CD4-positive, alpha-beta T cell (primary cell): ENCODE measurements at regions of chr12 and their contacts with region 1.

Region 1: GRCh38 chr12:131949431-131950181 is at the start of gene EP400:
- DNase-seq: peak; percentile 83 to 98 (median 94)
- ATAC-seq: peak; percentile 85
- H3K4me3 ChIP-seq: peak within 1 kb of the TSS; percentile 93
- H3K4me3 Mint-ChIP-seq: peak within 1 kb of the TSS; percentile 93
- H3K27ac ChIP-seq: peak within 1 kb of the TSS; percentile 48 to 70
- H3K27ac Mint-ChIP-seq: peak within 1 kb of the TSS; percentile 90
- H3K4me1 ChIP-seq: peaks cover 47% of the 10 kb centered on the region
- H3K4me1 Mint-ChIP-seq: peaks cover 45% of the 10 kb centered on the region
- H3K27me3 ChIP-seq: no peaks in the 10 kb centered on the region
- H3K27me3 Mint-ChIP-seq: no peaks in the 10 kb centered on the region
- CTCF ChIP-seq: peak; percentile 22
- total RNA-seq, gene EP400: 56.4 to 56.5 TPM

Region 2: DNA sequence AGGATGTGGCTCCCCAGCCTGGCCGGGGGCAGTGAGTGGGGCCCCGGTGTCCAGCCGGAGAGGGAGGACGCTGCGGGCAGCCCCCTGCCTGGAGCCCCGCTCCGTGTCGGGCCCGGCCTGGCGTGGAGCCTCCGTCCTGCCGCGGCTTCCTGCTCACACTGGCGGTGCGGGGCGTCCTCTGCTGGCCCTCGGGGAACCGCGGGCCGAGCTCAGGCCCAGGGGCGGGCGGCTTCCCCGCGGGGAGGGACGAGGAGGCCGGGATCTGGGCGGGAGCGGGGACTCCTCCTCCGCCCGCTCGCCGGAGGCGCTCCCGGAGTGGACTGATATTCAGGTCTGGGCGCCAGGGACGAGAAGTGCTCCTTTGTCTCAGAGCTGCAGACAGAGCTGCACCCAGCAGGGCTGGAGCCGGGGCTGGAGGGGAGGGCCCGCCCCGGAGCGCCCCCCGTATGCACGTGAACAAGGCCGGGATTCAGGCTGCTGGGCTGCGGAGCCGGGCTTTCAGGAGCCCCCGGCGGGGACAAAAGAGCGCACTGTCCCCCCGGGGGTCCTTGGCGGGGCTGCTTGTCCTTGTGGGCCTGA is 119.2 kb before region 1 on chr12:
- CTCF ChIA-PET with region 1: no interaction called
- POLR2A ChIA-PET with region 1: no interaction called
- intact Hi-C with region 1: loop called in 1 of 2 experiments (anchors 10 kb)
- DNase-seq: peak in 5 of 14 experiments; percentile 25 to 64 (median 46)
- ATAC-seq: peak; percentile 21
- H3K4me3 ChIP-seq: peak overlapping the region; percentile 44
- H3K4me3 Mint-ChIP-seq: peak overlapping the region; percentile 78
- H3K27ac ChIP-seq: no peak overlapping the region
- H3K27ac Mint-ChIP-seq: no peak overlapping the region
- H3K4me1 ChIP-seq: peaks cover 28% of the 10 kb centered on the region
- H3K4me1 Mint-ChIP-seq: peaks cover 13% of the 10 kb centered on the region
- H3K27me3 ChIP-seq: peaks cover 30 to 45% of the 10 kb centered on the region in 2 experiments
- H3K27me3 Mint-ChIP-seq: peaks cover 51% of the 10 kb centered on the region
- CTCF ChIP-seq: no peak

Region 3: GRCh38 chr12:131894313-131894860 is 55.2 kb before region 1 on chr12 and contains the start of gene ULK1:
- CTCF ChIA-PET with region 1: no interaction called
- POLR2A ChIA-PET with region 1: no interaction called
- intact Hi-C with region 1: loop called (anchors 1 kb)
- DNase-seq: peak; percentile 83 to 96 (median 92)
- ATAC-seq: peak; percentile 82
- H3K4me3 ChIP-seq: peak within 1 kb of the TSS; percentile 71
- H3K4me3 Mint-ChIP-seq: peak within 1 kb of the TSS; percentile 93
- H3K27ac ChIP-seq: peak within 1 kb of the TSS in 1 of 2 donors; percentile 13
- H3K27ac Mint-ChIP-seq: peak within 1 kb of the TSS; percentile 88
- H3K4me1 ChIP-seq: peaks cover 31% of the 10 kb centered on the region
- H3K4me1 Mint-ChIP-seq: peaks cover 25% of the 10 kb centered on the region
- H3K27me3 ChIP-seq: no peaks in the 10 kb centered on the region
- H3K27me3 Mint-ChIP-seq: no peaks in the 10 kb centered on the region
- CTCF ChIP-seq: no peak
- total RNA-seq, gene ULK1: 85.0 to 91.6 TPM

Region 4: GRCh38 chr12:131928711-131929580 is 20.7 kb before region 1 on chr12 and contains the start of gene PUS1:
- CTCF ChIA-PET with region 1: interaction called, 19 read pairs
- POLR2A ChIA-PET with region 1: interaction called, 10 read pairs
- intact Hi-C with region 1: loop called (anchors 1 kb)
- DNase-seq: peak; percentile 87 to 97 (median 92)
- ATAC-seq: peak; percentile 84
- H3K4me3 ChIP-seq: peak within 1 kb of the TSS; percentile 96
- H3K4me3 Mint-ChIP-seq: peak within 1 kb of the TSS; percentile 97
- H3K27ac ChIP-seq: peak within 1 kb of the TSS; percentile 55 to 61
- H3K27ac Mint-ChIP-seq: peak within 1 kb of the TSS; percentile 82
- H3K4me1 ChIP-seq: peaks cover 28% of the 10 kb centered on the region
- H3K4me1 Mint-ChIP-seq: peaks cover 35% of the 10 kb centered on the region
- H3K27me3 ChIP-seq: no peaks in the 10 kb centered on the region
- H3K27me3 Mint-ChIP-seq: no peaks in the 10 kb centered on the region
- CTCF ChIP-seq: no peak
- total RNA-seq, gene PUS1: 17.7 to 18.2 TPM

Region 5: DNA sequence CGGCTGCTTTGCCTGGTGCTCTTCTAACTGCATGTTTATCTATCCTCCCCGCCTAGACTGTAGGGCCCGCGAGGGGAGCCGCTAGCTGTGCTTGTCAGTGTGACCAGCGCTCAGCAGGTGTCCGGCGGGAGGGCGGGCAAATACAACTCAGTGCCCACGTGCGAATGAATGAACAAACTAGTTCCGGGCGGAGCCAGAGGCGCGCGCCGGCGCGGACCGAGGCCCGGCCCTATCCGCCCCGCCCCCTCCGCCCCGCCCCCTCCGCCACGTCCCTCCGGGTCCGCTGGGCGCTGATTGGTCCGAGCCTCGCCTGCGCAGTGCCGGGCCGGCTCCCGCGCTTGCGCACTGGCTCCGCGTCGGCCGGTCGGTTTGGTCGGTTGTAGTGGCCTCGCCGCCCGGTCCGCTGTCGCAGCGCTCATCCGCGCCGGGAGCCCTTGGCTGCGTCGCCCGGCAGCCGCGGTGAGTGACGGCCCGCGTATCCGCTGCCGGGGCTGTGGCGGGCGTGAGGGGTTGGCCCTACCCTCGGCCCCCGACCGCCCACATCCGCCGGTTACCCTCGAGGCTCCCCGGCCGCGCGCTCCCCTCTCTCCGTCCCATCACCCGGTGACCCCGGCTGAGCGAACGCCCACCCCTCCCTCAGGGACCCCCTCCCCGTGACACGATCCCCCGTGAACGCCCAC is 134.5 kb after region 1 on chr12:
- CTCF ChIA-PET with region 1: no interaction called
- POLR2A ChIA-PET with region 1: no interaction called
- intact Hi-C with region 1: loop called in 1 of 2 experiments (anchors 5 kb)
- DNase-seq: peak; percentile 74 to 95 (median 84)
- ATAC-seq: peak; percentile 94
- H3K4me3 ChIP-seq: peak overlapping the region; percentile 75
- H3K4me3 Mint-ChIP-seq: peak overlapping the region; percentile 86
- H3K27ac ChIP-seq: peak overlapping the region in 1 of 2 donors; percentile 88
- H3K27ac Mint-ChIP-seq: peak overlapping the region; percentile 24
- H3K4me1 ChIP-seq: peaks cover 23% of the 10 kb centered on the region
- H3K4me1 Mint-ChIP-seq: peaks cover 27% of the 10 kb centered on the region
- H3K27me3 ChIP-seq: no peaks in the 10 kb centered on the region
- H3K27me3 Mint-ChIP-seq: no peaks in the 10 kb centered on the region
- CTCF ChIP-seq: no peak